Activated T-helper 1 cell treated with anti-CD3 and anti-CD28 coated beads, Interleukin-12 subunit alpha, Interleukin-12 subunit beta, Interleukin-2, Interleukin-4 antibody, amounts not matched to agents 30 ng/mL and 10 ng/mL and 1 ng/mL, durations not matched to agents 14 hours and 24 hours and 36 hours (primary cell): ENCODE measurements at regions of chr14 and their contacts with region 1.

Region 1: GRCh38 chr14:55333711-55334485 is 62.7 kb downstream of the FBXO34 start:
- DNase-seq: no peak
- H3K4me3 Mint-ChIP-seq: peak overlapping the region; percentile 62
- H3K27ac Mint-ChIP-seq: peak overlapping the region; percentile 77
- H3K4me1 Mint-ChIP-seq: peaks cover 85% of the 10 kb centered on the region
- H3K27me3 Mint-ChIP-seq: no peaks in the 10 kb centered on the region

Region 2: GRCh38 chr14:54435500-54435981 is 898.4 kb before region 1 on chr14:
- intact Hi-C with region 1: loop called (anchors 2 kb)
- DNase-seq: no peak
- H3K4me3 Mint-ChIP-seq: peak overlapping the region; percentile 74
- H3K27ac Mint-ChIP-seq: peak overlapping the region; percentile 89
- H3K4me1 Mint-ChIP-seq: peaks cover 73% of the 10 kb centered on the region
- H3K27me3 Mint-ChIP-seq: no peaks in the 10 kb centered on the region

Region 3: DNA sequence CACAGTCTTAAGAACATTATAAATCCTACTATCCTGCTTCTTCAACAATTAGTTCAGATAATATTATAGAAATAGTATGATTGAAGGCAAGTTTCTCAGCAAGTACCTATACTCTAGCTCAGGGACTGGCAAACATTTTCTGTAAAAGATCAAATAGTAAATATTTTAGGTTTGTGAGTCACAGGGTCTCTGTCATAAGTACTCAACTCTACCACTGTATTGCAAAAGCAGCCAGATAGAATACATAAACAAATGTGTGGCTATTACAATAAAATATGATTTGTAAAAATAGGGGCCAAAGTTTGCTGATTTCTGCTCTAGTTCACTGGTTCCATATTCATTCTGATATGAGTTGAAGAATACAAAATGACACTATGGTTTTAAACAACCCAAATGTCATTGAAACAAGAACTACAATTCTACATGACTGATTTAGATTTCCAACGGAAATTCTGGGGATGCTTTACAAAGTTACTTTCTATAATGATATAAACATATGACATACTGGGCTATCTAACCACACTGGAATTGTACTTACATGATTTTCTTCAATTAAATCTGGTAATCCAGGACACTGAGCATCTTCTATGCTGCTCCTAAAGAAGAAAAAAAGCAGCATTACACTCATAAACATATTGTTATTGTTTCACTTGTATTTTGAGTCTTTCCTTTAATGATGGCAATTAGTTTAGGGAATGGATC is 181.7 kb before region 1 on chr14:
- intact Hi-C with region 1: no loop called
- DNase-seq: no peak
- H3K4me3 Mint-ChIP-seq: no peak overlapping the region
- H3K27ac Mint-ChIP-seq: no peak overlapping the region
- H3K4me1 Mint-ChIP-seq: peaks cover 8% of the 10 kb centered on the region
- H3K27me3 Mint-ChIP-seq: no peaks in the 10 kb centered on the region

Region 4: DNA sequence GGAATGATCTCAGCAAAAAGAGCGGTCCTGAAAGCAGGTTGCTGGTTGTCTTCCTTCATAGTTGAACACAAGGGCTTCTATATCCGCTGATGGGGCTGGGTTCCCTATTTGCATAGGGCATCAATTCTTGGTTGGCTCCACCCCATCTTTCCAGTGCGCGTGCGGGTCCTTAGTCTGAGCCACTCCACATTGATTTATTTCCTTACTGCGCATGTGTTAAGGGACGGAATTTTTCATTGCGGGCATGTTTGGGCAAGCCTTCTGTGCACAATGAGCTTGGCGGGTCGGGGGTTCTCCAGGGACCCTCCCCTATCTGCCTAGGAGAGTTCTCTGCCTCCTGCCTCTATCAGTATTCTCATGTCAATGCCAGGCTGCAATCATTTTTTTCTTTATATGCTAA is 121.3 kb before region 1 on chr14:
- intact Hi-C with region 1: loop called (anchors 5 kb)
- DNase-seq: no peak
- H3K4me3 Mint-ChIP-seq: no peak overlapping the region
- H3K27ac Mint-ChIP-seq: no peak overlapping the region
- H3K4me1 Mint-ChIP-seq: no peaks in the 10 kb centered on the region
- H3K27me3 Mint-ChIP-seq: peaks cover 9% of the 10 kb centered on the region

Region 5: DNA sequence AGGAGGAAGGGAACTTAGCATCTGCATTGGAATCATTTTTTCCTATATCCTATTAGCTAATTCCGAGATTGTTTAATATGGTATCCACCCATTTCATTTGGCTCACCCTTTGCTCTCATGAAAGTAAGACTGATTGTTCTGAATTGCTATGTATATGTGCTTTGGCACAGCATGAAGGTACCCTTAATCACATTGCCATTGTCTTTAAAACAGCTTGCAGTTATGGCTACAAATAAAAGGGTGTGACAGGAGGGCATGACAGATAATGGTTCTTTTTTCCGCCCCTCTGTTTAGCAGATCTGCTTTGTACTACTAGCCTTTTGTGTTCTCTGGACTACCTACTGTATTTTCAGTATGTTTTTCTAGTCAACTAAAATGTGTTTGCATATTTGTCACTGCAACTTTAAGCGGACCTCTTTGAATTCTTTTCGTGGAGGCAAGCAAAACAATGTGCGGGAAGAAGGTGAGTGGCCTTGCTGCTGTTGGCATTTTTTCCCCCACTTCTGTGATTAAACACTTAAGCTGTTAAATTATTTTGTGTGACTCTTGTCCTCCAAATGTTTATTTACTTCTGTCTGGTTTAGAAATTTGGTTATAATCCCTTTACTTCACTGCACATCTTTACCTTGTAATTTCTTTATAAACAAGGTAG is 26.8 kb before region 1 on chr14:
- intact Hi-C with region 1: loop called (anchors 2 kb)
- DNase-seq: no peak
- H3K4me3 Mint-ChIP-seq: no peak overlapping the region
- H3K27ac Mint-ChIP-seq: no peak overlapping the region
- H3K4me1 Mint-ChIP-seq: peaks cover 30% of the 10 kb centered on the region
- H3K27me3 Mint-ChIP-seq: no peaks in the 10 kb centered on the region

Region 6: DNA sequence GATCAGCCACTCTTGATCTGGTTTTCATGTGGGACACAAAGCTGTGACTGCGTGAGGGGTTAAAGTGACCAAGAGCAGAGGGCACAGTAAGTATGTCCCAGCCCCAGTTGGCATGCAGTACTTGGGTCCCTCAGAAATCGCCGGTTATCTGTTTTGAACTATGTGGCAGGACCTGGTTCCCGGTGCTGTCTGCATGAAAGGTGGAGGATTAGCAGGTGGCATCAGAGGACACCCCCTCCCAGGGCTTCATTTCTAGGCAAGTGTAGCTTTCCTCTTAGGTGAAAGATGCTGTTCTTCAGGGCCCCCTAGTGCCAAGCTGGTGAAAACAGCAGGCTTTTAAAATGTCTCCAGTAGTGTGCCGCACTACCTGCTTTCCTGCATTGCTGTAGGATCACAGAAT is 20.6 kb after region 1 on chr14:
- intact Hi-C with region 1: loop called (anchors 1 kb)
- DNase-seq: peak; percentile 45
- H3K4me3 Mint-ChIP-seq: peak overlapping the region; percentile 71
- H3K27ac Mint-ChIP-seq: peak overlapping the region; percentile 93
- H3K4me1 Mint-ChIP-seq: peaks cover 29% of the 10 kb centered on the region
- H3K27me3 Mint-ChIP-seq: no peaks in the 10 kb centered on the region

Region 7: DNA sequence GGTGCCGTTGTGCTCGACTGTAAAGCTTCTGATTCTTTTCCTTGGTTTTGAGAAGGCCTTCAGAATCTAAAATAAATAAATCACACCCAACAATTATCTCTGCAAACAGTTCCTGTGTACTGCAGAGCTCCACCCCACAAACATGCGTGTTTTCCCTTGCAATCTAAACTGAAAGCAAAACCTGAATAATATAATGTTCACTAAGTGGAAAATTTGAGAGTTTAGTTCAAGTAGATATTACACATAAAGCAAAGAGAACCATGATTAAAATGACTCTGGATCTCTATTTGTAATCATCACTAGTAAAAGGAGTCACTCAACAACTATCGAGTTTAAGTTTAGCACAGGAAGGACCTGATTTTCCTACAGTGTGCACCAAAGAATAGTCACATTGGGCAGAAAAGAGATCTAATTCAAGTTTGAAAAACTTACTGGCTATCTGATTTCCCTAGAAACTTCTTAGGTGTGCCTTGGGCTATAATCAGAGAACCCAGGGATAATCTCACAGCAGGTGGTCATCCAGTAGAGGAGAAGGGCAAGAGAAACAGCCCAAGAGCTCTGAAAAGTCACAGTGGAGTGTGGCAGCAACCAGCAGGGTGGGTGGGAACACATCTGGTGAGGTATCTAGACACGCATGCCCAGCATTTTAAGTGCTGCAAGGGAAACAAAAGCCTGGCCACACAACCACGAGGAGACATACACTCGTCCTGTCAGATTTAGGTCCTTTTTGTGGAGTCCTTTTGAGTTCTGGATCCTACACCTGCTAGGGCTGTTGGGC is 52.3 kb after region 1 on chr14:
- intact Hi-C with region 1: loop called (anchors 1 kb)
- DNase-seq: peak; percentile 5
- H3K4me3 Mint-ChIP-seq: peak overlapping the region; percentile 69
- H3K27ac Mint-ChIP-seq: peak overlapping the region; percentile 96
- H3K4me1 Mint-ChIP-seq: peaks cover 52% of the 10 kb centered on the region
- H3K27me3 Mint-ChIP-seq: no peaks in the 10 kb centered on the region